Psoas muscle (tissue), 8 donors: ENCODE measurements at regions of chr9 and their contacts with region 1.

Region 1: GRCh38 chr9:122307925-122308324 is 43.2 kb downstream of the MRRF start:
- DNase-seq: no peak
- ATAC-seq: peak in 2 of 4 donors; percentile 19 to 30
- H3K4me3 ChIP-seq: no peak overlapping the region
- H3K27ac ChIP-seq: no peak overlapping the region
- H3K4me1 ChIP-seq: peaks cover 4% of the 10 kb centered on the region
- H3K27me3 ChIP-seq: no peaks in the 10 kb centered on the region
- CTCF ChIP-seq: no peak

Region 2: DNA sequence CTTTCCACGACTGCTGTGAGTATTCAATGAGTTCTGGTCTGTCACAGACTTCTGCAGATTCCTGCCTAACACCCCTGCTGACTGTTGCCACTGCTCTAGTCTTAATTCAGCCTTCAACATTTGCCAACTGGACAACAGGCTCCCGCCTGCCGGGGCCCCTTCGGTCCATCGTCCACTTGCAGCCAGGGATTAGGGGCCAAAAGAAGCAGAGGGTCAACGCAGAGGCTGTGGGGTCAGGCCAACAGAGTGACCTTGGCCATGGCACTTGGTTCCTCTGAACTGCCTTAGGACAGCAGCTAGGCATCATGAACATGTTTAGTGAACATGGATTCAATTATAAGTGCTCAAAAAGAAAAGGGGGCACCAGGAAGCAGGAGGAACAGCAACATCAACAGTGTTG is 119.6 kb before region 1 on chr9:
- intact Hi-C with region 1: loop called in 1 of 2 experiments (anchors 1 kb)
- DNase-seq: no peak
- ATAC-seq: no peak
- H3K4me3 ChIP-seq: no peak overlapping the region
- H3K27ac ChIP-seq: no peak overlapping the region
- H3K4me1 ChIP-seq: no peaks in the 10 kb centered on the region
- H3K27me3 ChIP-seq: no peaks in the 10 kb centered on the region
- CTCF ChIP-seq: no peak

Region 3: GRCh38 chr9:122286764-122287163 is 21.2 kb before region 1 on chr9:
- intact Hi-C with region 1: no loop called
- DNase-seq: no peak
- ATAC-seq: no peak
- H3K4me3 ChIP-seq: no peak overlapping the region
- H3K27ac ChIP-seq: no peak overlapping the region
- H3K4me1 ChIP-seq: no peaks in the 10 kb centered on the region
- H3K27me3 ChIP-seq: no peaks in the 10 kb centered on the region
- CTCF ChIP-seq: no peak